Sigmoid colon (tissue), 7 donors: ENCODE measurements at regions of chr2 and their contacts with region 1.

Region 1: DNA sequence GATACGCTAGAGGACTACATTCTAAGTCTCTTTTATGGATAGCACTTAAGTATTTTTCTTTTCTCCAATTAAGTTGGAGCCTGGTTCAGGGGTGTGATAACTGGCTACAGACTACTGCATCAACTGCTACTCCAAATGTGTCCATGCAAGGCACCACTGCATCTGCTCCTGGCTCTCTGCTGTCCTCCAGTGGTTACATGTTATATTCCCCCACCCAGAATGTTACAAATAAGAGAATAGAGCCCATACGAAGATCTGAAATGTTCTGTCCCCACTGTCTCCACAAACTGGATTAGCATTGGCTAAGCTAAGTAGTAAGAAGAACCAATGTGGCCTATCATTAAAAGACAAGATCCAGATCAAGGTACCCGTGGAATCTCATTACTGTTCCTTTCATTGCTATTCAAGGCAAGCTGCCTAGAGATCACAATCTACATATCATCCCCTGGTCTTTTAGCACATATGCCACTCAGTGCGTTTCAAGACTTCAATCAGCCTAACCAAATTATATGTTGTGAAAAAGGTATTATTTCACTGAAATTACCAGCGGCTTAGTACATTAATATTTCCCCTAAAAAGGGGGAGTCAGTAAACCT is 308.3 kb upstream of the SLC8A1 start:
- DNase-seq: peak; percentile 72
- H3K4me3 ChIP-seq: no peak overlapping the region
- H3K27ac ChIP-seq: peak overlapping the region in 2 of 4 donors; percentile 67 to 70
- H3K4me1 ChIP-seq: peaks cover 0 to 22% (median 18%) of the 10 kb centered on the region in 4 donors
- H3K27me3 ChIP-seq: no peaks in the 10 kb centered on the region
- CTCF ChIP-seq: peak; percentile 68 to 85 (median 76)
- EP300 ChIP-seq: no peak
- POLR2A ChIP-seq: no peak

Region 2: GRCh38 chr2:40244675-40245074 is 515.5 kb before region 1 on chr2:
- intact Hi-C with region 1: loop called (anchors 10 kb)
- DNase-seq: peak; percentile 77
- H3K4me3 ChIP-seq: no peak overlapping the region
- H3K27ac ChIP-seq: peak overlapping the region; percentile 1 to 75 (median 67)
- H3K4me1 ChIP-seq: peaks cover 0 to 63% (median 50%) of the 10 kb centered on the region in 4 donors
- H3K27me3 ChIP-seq: no peaks in the 10 kb centered on the region
- CTCF ChIP-seq: peak in 3 of 4 experiments; percentile 23 to 48 (median 40)
- EP300 ChIP-seq: no peak
- POLR2A ChIP-seq: no peak

Region 3: GRCh38 chr2:40488101-40488601 is 272.0 kb before region 1 on chr2:
- intact Hi-C with region 1: loop called (anchors 10 kb)
- DNase-seq: no peak
- H3K4me3 ChIP-seq: peak overlapping the region in 3 of 4 donors; percentile 3 to 52 (median 5)
- H3K27ac ChIP-seq: peak overlapping the region in 3 of 4 donors; percentile 67 to 78 (median 75)
- H3K4me1 ChIP-seq: peaks cover 0 to 36% (median 19%) of the 10 kb centered on the region in 4 donors
- H3K27me3 ChIP-seq: no peaks in the 10 kb centered on the region
- CTCF ChIP-seq: peak in 3 of 4 experiments; percentile 30 to 57 (median 55)
- EP300 ChIP-seq: no peak
- POLR2A ChIP-seq: no peak